Prostate gland (tissue), 2 donors: ENCODE measurements at regions of chrX and their contacts with region 1.

Region 1: GRCh38 chrX:129606918-129607317 is 47.8 kb downstream of the APLN start:
- DNase-seq: peak; percentile 25
- H3K4me3 ChIP-seq: no peak overlapping the region
- H3K27ac ChIP-seq: no peak overlapping the region
- H3K4me1 ChIP-seq: no peaks in the 10 kb centered on the region
- H3K27me3 ChIP-seq: no peaks in the 10 kb centered on the region
- CTCF ChIP-seq: peak; percentile 31 to 82 (median 74)
- POLR2A ChIP-seq: no peak

Region 2: DNA sequence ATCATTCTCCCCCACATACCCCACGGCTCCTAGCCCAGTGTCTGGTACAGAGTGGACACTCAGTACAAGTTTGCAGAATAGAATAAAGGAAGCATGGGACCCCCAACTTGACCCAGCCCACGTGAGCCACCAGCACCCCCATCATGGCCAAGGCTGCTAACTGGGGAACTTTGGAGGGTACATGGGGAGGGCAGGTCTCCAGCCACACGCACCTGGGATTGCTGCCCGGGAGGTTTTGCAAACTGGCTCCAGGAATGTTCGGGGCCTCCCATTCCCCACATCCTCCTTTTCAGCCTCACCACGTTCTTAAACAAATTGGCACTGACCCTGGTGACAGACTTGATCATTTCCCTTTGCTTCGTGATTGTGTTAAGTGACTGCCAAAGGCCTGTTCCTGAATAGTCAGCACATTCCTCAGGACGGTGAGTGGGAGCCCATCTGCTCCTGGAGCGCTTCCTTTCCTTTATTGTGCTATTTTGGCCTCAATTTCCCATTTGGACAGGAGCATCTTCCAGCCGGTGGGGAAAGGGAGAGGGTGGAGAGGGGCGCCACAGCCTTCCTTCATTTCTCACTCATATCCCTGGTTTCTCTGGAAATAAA is 113.1 kb after region 1 on chrX:
- intact Hi-C with region 1: loop called (anchors 5 kb)
- DNase-seq: no peak
- H3K4me3 ChIP-seq: no peak overlapping the region
- H3K27ac ChIP-seq: no peak overlapping the region
- H3K4me1 ChIP-seq: no peaks in the 10 kb centered on the region
- H3K27me3 ChIP-seq: no peaks in the 10 kb centered on the region
- CTCF ChIP-seq: no peak
- POLR2A ChIP-seq: no peak